ENCODE measurements at regions of chr19 and their contacts with region 1.

Region 1: DNA sequence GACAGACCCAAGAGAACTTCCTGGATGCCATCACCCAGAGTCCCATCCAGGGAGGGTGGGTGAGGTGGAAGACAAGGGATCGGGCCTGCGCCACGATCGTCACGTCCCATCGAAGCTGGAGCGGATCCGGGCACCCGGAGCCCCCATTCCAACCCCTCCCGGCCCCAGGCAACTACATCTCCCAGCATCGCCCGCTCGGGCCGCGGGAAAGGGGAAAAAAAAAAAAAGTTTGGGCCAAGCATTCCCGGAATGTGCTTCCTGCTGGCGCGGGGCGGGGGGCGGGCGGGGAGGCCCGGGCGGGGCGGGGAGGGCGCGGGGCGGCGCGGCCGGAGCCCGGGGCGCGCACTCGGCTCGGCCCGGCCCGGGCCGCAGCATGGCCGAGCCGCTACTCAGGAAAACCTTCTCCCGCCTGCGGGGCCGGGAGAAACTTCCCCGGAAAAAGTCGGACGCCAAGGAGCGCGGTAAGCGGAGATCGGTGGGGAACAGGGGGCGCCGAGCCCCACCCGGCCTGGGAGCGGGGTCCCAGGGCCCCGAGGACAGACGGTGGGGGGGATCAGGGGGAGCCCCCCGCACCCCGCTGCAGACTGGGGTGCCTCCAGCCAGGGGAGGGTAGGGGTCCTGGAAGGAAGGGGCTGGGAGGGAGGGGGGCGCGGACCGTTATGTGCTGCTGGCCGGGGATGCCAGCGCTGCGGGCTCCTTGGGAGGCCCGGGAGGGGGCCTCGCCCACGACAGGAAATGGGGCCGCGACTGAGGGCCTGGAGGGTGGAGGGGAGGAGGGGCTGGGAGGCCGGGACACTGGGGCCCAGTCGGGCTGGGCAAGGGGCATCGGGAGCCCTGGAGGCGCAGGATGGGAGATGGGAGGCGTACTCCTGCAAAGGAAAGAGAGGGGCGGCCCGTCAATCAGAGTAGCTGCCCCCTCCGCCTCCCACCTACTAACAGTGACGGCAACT is at the start of gene SYDE1:
- DNase-seq: peak; percentile 80
- H3K4me3 ChIP-seq: peak within 1 kb of the TSS; percentile 89 to 99 (median 94)
- H3K27ac ChIP-seq: peak within 1 kb of the TSS; percentile 93 to 99 (median 96)
- H3K4me1 ChIP-seq: peaks cover 0 to 21% (median 18%) of the 10 kb centered on the region in 4 donors
- H3K27me3 ChIP-seq: no peaks in the 10 kb centered on the region
- CTCF ChIP-seq: no peak
- EP300 ChIP-seq: no peak
- POLR2A ChIP-seq: peak in 1 of 2 donors; percentile 32
- total RNA-seq, gene SYDE1: 29.6 to 39.9 (median 35.8) TPM

Region 2: DNA sequence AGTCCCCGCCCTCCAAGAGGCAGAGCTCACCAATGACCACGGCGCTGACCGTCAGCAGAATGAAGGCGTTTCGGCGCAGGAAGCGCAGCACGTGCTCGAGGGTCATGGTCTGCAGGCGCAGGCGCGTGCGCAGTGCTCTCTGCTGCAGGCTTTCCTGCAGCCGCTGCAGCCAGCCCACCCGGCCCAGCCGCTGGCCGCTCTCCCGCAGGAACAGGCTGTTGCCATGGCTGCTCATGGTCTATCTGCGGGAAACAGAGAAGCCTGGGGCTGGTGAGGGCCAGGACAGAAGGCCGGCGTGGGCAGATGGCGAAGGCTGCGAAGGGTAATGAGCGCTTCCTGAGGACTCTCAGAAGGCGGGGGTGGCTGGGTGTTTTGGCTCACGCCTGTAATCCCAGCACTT is 134.7 kb before region 1 on chr19:
- intact Hi-C with region 1: no loop called
- DNase-seq: no peak
- H3K4me3 ChIP-seq: no peak overlapping the region
- H3K27ac ChIP-seq: no peak overlapping the region
- H3K4me1 ChIP-seq: no peaks in the 10 kb centered on the region
- H3K27me3 ChIP-seq: peaks cover 0 to 32% (median 4%) of the 10 kb centered on the region in 3 donors
- CTCF ChIP-seq: no peak
- EP300 ChIP-seq: no peak
- POLR2A ChIP-seq: no peak

Region 3: GRCh38 chr19:15125232-15126067 is 18.1 kb after region 1 on chr19:
- intact Hi-C with region 1: loop called (anchors 2 kb)
- DNase-seq: peak; percentile 100
- H3K4me3 ChIP-seq: peak overlapping the region; percentile 74 to 89 (median 78)
- H3K27ac ChIP-seq: peak overlapping the region; percentile 92 to 98 (median 96)
- H3K4me1 ChIP-seq: peaks cover 0 to 31% (median 27%) of the 10 kb centered on the region in 4 donors
- H3K27me3 ChIP-seq: no peaks in the 10 kb centered on the region
- CTCF ChIP-seq: peak in 1 of 4 experiments; percentile 18
- EP300 ChIP-seq: peak in 1 of 4 donors; percentile 72
- POLR2A ChIP-seq: peak in 1 of 2 donors; percentile 46

Region 4: DNA sequence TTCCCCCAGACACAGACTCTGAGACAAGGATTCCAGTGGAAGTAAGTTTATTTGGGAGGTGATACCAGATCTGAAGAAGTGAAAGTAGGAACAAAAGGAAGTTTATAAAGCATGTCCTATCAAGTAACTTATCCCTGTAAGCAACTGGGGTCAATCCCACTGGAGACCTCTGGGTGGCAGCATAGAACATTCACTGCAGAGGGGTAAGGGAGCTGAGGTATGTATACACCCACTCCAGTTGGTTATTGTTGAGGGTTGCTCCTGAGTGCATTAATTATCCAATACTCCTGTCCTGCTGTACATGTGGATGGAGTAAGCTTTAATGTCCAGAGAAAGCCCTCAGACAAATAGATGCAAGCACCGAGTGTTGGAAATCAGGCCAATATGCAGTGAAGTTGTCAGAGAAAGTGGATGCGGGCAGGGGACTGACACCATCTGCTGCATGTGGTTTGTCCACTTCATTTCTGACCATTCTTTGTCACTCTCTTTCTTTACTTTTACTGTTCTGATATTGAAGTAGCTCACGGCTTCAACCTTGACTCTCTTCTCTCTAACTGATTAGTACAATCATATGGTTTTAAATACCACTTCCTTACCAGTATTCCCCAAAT is 46.8 kb after region 1 on chr19:
- intact Hi-C with region 1: loop called (anchors 5 kb)
- DNase-seq: peak; percentile 17
- H3K4me3 ChIP-seq: no peak overlapping the region
- H3K27ac ChIP-seq: no peak overlapping the region
- H3K4me1 ChIP-seq: peaks cover 0 to 3% (median 0%) of the 10 kb centered on the region in 4 donors
- H3K27me3 ChIP-seq: no peaks in the 10 kb centered on the region
- CTCF ChIP-seq: peak in 1 of 4 experiments; percentile 29
- EP300 ChIP-seq: no peak
- POLR2A ChIP-seq: no peak

Region 5: DNA sequence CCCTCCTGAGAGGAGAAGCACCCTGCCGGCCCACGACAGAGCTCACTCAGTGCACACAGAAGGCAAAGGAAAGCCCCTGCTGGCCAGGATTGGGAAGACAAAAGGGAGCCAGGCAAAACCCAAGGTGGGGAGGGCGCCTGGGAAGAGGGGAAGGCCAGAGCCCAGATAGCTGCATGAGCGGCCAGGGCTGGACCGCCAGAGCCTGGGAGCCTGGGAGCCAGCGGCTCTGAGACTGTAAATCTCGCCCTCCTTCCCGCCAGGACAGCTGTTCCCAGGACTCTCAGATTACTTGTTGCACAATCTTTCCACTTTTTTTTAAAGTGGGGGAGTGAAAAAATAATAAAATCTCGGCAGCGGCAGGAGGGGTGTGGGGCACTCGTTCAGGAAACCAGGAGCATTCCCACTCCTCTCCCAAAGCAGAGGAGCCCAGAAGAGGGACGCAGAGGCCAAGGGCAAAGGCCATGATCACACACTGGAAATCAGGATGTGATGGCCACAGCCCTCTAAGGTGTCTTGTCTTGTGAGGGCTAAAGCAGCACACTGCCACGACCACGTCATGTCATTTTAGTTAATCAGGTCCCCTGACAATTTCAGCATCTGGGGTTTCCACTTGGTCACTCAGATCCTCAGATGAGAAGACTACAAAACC is 144.5 kb after region 1 on chr19:
- intact Hi-C with region 1: loop called (anchors 5 kb)
- DNase-seq: peak; percentile 97
- H3K4me3 ChIP-seq: peak overlapping the region in 2 of 4 donors; percentile 16 to 17
- H3K27ac ChIP-seq: peak overlapping the region; percentile 77 to 87 (median 84)
- H3K4me1 ChIP-seq: peaks cover 0 to 69% (median 66%) of the 10 kb centered on the region in 4 donors
- H3K27me3 ChIP-seq: no peaks in the 10 kb centered on the region
- CTCF ChIP-seq: peak; percentile 33 to 72 (median 64)
- EP300 ChIP-seq: peak in 2 of 4 donors; percentile 41 to 77
- POLR2A ChIP-seq: no peak

Measured in sigmoid colon (tissue), 7 donors.